CD8-positive, alpha-beta memory T cell (primary cell): ENCODE measurements at regions of chr10 and their contacts with region 1.

Region 1: GRCh38 chr10:30591249-30591670 is 38.3 kb downstream of the LYZL2 start:
- DNase-seq: peak; percentile 14 to 54 (median 43)
- H3K4me3 ChIP-seq: no peak overlapping the region
- H3K4me3 Mint-ChIP-seq: no peak overlapping the region
- H3K27ac ChIP-seq: no peak overlapping the region
- H3K27ac Mint-ChIP-seq: peak overlapping the region in 1 of 8 donors; percentile 52
- H3K4me1 ChIP-seq: no peaks in the 10 kb centered on the region
- H3K4me1 Mint-ChIP-seq: no peaks in the 10 kb centered on the region
- H3K27me3 ChIP-seq: no peaks in the 10 kb centered on the region
- H3K27me3 Mint-ChIP-seq: peaks cover 5 to 19% of the 10 kb centered on the region in 2 donors

Region 2: GRCh38 chr10:29998142-29998808 is 593.0 kb before region 1 on chr10:
- CTCF ChIA-PET with region 1: interaction called, 10 read pairs
- POLR2A ChIA-PET with region 1: no interaction called
- DNase-seq: peak; percentile 54 to 80 (median 64)
- H3K4me3 ChIP-seq: no peak overlapping the region
- H3K4me3 Mint-ChIP-seq: no peak overlapping the region
- H3K27ac ChIP-seq: no peak overlapping the region
- H3K27ac Mint-ChIP-seq: no peak overlapping the region
- H3K4me1 ChIP-seq: no peaks in the 10 kb centered on the region
- H3K4me1 Mint-ChIP-seq: peaks cover 0 to 11% (median 9%) of the 10 kb centered on the region in 3 donors
- H3K27me3 ChIP-seq: peaks cover 6% of the 10 kb centered on the region
- H3K27me3 Mint-ChIP-seq: peaks cover 36 to 63% of the 10 kb centered on the region in 2 donors

Region 3: DNA sequence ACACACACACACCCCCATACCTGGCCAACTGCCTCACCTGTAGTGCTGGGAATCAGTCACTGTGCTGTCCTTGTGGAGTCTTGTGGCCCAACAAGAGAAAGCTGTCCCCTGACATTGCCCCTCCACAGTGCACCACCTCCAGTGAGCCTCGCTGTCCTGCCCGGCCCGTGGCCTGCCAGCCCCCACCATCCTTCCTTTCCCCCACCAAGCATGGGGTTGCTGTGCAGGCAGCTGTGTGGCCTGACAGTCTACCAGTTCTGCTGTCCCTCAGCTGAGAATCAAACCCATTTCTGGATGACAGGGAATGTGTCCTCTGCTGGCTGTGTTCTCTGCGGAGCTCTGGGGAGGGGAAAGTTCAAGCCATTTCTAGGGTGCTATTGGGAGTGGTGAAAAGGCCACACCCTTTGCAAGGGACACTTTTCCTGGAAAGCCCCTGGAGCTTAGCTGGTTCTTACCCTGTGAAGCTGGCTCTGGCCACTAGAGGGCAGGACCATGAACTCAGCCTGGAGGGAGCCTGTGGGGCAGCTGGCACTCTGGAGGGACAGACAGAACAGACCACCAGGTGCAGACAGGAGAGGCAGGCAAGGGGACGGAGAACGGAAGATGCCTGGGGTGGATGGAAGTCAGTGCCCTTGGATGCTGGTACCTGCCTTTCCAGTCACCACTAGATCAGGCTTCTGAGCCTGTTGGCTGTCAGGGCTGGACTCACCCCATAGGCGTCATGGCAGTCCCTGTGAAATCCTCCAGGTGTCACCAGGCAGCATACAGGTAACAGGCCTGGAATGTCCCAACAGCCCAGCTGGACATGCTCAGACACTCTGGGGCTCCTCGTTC is 231.7 kb before region 1 on chr10:
- CTCF ChIA-PET with region 1: interaction called, 21 read pairs
- POLR2A ChIA-PET with region 1: no interaction called
- DNase-seq: peak; percentile 26 to 73 (median 41)
- H3K4me3 ChIP-seq: no peak overlapping the region
- H3K4me3 Mint-ChIP-seq: no peak overlapping the region
- H3K27ac ChIP-seq: no peak overlapping the region
- H3K27ac Mint-ChIP-seq: no peak overlapping the region
- H3K4me1 ChIP-seq: no peaks in the 10 kb centered on the region
- H3K4me1 Mint-ChIP-seq: peaks cover 0 to 3% (median 2%) of the 10 kb centered on the region in 3 donors
- H3K27me3 ChIP-seq: no peaks in the 10 kb centered on the region
- H3K27me3 Mint-ChIP-seq: peaks cover 6 to 29% of the 10 kb centered on the region in 2 donors

Region 4: GRCh38 chr10:30392564-30392990 is 198.7 kb before region 1 on chr10:
- CTCF ChIA-PET with region 1: interaction called, 153 read pairs
- POLR2A ChIA-PET with region 1: no interaction called
- DNase-seq: peak; percentile 56 to 79 (median 63)
- H3K4me3 ChIP-seq: no peak overlapping the region
- H3K4me3 Mint-ChIP-seq: peak overlapping the region in 1 of 7 donors; percentile 6
- H3K27ac ChIP-seq: no peak overlapping the region
- H3K27ac Mint-ChIP-seq: peak overlapping the region in 1 of 8 donors; percentile 40
- H3K4me1 ChIP-seq: peaks cover 4% of the 10 kb centered on the region
- H3K4me1 Mint-ChIP-seq: peaks cover 3 to 10% (median 4%) of the 10 kb centered on the region in 3 donors
- H3K27me3 ChIP-seq: no peaks in the 10 kb centered on the region
- H3K27me3 Mint-ChIP-seq: peaks cover 11 to 15% of the 10 kb centered on the region in 2 donors

Region 5: GRCh38 chr10:30398788-30399187 is 192.5 kb before region 1 on chr10:
- CTCF ChIA-PET with region 1: interaction called, 153 read pairs
- POLR2A ChIA-PET with region 1: no interaction called
- DNase-seq: peak in 1 of 5 donors; percentile 13
- H3K4me3 ChIP-seq: no peak overlapping the region
- H3K4me3 Mint-ChIP-seq: peak overlapping the region in 1 of 7 donors; percentile 32
- H3K27ac ChIP-seq: no peak overlapping the region
- H3K27ac Mint-ChIP-seq: peak overlapping the region in 1 of 8 donors; percentile 45
- H3K4me1 ChIP-seq: peaks cover 20% of the 10 kb centered on the region
- H3K4me1 Mint-ChIP-seq: peaks cover 13 to 24% (median 17%) of the 10 kb centered on the region in 3 donors
- H3K27me3 ChIP-seq: no peaks in the 10 kb centered on the region
- H3K27me3 Mint-ChIP-seq: peaks cover 4 to 5% of the 10 kb centered on the region in 2 donors

Region 6: GRCh38 chr10:30413996-30414576 is 177.2 kb before region 1 on chr10:
- CTCF ChIA-PET with region 1: interaction called, 19 read pairs
- POLR2A ChIA-PET with region 1: no interaction called
- DNase-seq: peak in 2 of 5 donors; percentile 37 to 40
- H3K4me3 ChIP-seq: no peak overlapping the region
- H3K4me3 Mint-ChIP-seq: no peak overlapping the region
- H3K27ac ChIP-seq: no peak overlapping the region
- H3K27ac Mint-ChIP-seq: peak overlapping the region in 1 of 8 donors; percentile 11
- H3K4me1 ChIP-seq: peaks cover 10% of the 10 kb centered on the region
- H3K4me1 Mint-ChIP-seq: peaks cover 17 to 21% (median 17%) of the 10 kb centered on the region in 3 donors
- H3K27me3 ChIP-seq: no peaks in the 10 kb centered on the region
- H3K27me3 Mint-ChIP-seq: no peaks in the 10 kb centered on the region

Region 7: DNA sequence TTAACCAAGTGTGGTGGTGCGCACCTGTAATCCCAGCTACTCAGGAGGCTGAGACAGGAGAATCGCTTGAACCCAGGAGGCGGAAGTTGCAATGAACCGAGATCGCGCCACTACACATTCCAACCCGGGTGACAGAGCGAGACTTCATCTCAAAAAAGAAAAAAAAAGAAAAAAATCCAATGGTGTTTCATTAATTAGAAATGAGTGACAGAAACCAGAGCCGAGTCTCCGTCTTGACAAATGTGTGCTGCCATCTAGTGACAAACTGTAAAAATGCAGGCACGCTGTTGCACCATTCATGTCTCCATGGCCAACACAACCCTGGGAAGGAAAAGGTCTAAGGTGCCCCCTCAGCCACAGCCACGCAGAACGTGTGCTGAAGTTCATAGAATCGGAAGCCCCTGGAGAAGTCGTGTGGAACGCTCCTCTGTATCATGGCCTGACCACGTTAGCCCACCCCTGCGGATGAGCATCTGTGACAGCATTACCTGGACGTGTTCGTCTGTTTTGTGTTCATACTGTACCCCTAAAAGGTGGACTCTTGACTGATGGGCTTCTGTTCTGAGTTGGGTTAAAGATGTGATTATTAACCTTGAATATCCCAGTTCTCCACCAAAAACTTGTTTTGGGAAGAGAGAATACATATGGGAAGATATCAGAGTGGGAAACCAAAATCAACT is 56.7 kb before region 1 on chr10:
- CTCF ChIA-PET with region 1: interaction called, 16 read pairs
- POLR2A ChIA-PET with region 1: no interaction called
- DNase-seq: peak; percentile 48 to 81 (median 68)
- H3K4me3 ChIP-seq: no peak overlapping the region
- H3K4me3 Mint-ChIP-seq: peak overlapping the region in 1 of 7 donors; percentile 73
- H3K27ac ChIP-seq: no peak overlapping the region
- H3K27ac Mint-ChIP-seq: peak overlapping the region in 5 of 8 donors; percentile 6 to 50 (median 11)
- H3K4me1 ChIP-seq: peaks cover 22% of the 10 kb centered on the region
- H3K4me1 Mint-ChIP-seq: peaks cover 36 to 52% (median 38%) of the 10 kb centered on the region in 3 donors
- H3K27me3 ChIP-seq: no peaks in the 10 kb centered on the region
- H3K27me3 Mint-ChIP-seq: no peaks in the 10 kb centered on the region

Region 8: GRCh38 chr10:30625080-30625479 is 33.8 kb after region 1 on chr10:
- CTCF ChIA-PET with region 1: no interaction called
- POLR2A ChIA-PET with region 1: no interaction called
- DNase-seq: no peak
- H3K4me3 ChIP-seq: no peak overlapping the region
- H3K4me3 Mint-ChIP-seq: no peak overlapping the region
- H3K27ac ChIP-seq: no peak overlapping the region
- H3K27ac Mint-ChIP-seq: no peak overlapping the region
- H3K4me1 ChIP-seq: no peaks in the 10 kb centered on the region
- H3K4me1 Mint-ChIP-seq: no peaks in the 10 kb centered on the region
- H3K27me3 ChIP-seq: no peaks in the 10 kb centered on the region
- H3K27me3 Mint-ChIP-seq: peaks cover 4 to 9% of the 10 kb centered on the region in 2 donors